Ovary (tissue), 10 donors: ENCODE measurements at regions of chr17 and their contacts with region 1.

Region 1: DNA sequence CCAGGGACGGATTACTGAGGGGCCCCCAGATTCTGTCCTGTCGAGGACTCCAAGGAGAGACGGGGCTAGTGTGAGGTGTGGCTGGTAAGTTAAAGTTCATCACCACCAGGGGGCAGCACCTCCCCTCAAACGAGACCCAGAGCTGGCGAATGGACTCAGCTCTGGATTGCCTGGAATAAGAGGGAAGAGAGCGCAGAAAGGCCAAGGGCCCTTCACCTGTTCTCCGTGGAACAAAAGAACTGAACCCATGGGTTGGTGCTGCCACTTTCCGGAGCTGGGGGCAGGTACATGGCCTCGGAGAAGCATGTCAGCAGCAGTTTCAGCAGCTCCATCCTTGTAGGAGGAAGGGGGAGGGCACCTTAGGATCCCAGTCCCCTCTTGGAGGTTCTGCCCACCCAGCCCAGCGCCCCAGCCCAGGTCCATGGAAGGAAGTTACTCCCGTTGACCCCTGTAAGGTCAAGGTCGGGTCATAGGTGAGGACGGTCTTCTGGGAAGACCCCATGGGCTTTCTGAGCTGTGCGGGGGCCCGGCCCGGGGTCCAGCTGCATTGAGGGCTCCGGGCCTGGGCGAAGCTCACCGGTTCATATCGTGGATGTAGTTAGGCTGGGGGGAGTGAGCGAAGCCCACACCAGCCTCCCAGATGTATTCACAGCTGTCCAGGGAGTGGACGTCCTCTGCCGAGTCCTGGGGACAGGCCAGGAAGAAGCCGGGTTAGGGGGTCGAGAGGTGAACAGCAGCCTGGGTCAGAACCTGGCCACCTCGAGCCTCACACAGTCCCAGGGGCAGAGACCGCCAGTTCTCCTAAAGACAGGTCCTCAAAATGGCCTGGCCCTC is 10.7 kb downstream of the HID1 start:
- DNase-seq: peak; percentile 83 to 93 (median 90)
- H3K4me3 ChIP-seq: no peak overlapping the region
- H3K27ac ChIP-seq: no peak overlapping the region
- H3K4me1 ChIP-seq: no peaks in the 10 kb centered on the region
- H3K27me3 ChIP-seq: no peaks in the 10 kb centered on the region
- CTCF ChIP-seq: peak; percentile 70 to 83 (median 83)
- EP300 ChIP-seq: no peak
- POLR2A ChIP-seq: no peak

Region 2: DNA sequence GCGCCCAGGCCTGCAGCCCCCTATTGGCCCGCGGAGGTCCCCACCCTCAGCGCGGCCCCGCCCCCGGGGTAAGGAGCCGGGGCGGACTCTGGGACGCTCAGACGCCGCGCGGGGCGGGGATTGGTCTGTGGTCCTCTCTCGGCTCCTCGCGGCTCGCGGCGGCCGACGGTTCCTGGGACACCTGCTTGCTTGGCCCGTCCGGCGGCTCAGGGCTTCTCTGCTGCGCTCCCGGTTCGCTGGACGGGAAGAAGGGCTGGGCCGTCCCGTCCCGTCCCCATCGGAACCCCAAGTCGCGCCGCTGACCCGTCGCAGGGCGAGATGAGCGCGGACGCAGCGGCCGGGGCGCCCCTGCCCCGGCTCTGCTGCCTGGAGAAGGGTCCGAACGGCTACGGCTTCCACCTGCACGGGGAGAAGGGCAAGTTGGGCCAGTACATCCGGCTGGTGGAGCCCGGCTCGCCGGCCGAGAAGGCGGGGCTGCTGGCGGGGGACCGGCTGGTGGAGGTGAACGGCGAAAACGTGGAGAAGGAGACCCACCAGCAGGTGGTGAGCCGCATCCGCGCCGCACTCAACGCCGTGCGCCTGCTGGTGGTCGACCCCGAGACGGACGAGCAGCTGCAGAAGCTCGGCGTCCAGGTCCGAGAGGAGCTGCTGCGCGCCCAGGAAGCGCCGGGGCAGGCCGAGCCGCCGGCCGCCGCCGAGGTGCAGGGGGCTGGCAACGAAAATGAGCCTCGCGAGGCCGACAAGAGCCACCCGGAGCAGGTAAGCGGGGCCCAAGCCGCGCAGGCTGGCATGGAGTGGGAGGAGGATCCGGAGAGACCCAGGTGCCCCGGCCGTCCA is 213.1 kb before region 1 on chr17 and contains the start of gene NHERF1:
- intact Hi-C with region 1: loop called in 2 of 4 experiments (anchors 5 kb)
- DNase-seq: peak; percentile 91 to 96 (median 94)
- H3K4me3 ChIP-seq: peak within 1 kb of the TSS; percentile 72
- H3K27ac ChIP-seq: peak within 1 kb of the TSS in 1 of 2 donors; percentile 65
- H3K4me1 ChIP-seq: peaks cover 10% of the 10 kb centered on the region
- H3K27me3 ChIP-seq: no peaks in the 10 kb centered on the region
- CTCF ChIP-seq: peak in 1 of 3 donors; percentile 23
- EP300 ChIP-seq: no peak
- POLR2A ChIP-seq: peak; percentile 92
- total RNA-seq, gene NHERF1: 12.1 to 101 (median 21.7) TPM

Region 3: DNA sequence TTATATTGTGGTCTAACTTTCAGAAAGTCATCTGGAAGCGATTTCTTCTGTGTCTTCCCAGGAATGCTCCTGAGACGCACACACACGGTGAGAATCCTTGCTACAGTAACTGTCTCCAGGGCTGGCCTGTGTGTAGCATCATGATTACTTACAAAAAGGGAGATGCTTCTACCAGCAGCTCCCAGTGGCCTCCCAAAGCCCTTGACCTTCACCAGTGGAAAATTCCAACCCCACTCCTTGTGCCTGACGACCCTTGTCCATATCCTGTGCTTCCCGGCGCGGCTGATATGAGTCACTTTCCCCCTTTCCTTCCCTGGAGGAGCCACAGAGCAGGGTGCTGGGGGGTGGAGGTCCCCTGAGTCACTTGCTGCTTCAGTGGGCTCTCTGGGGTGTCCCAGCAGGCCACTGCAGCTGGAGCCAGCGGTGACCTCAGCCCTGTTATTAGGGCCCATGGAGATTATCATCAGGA is 163.6 kb before region 1 on chr17:
- intact Hi-C with region 1: loop called in 2 of 4 experiments (anchors 5 to 10 kb)
- DNase-seq: no peak
- H3K4me3 ChIP-seq: no peak overlapping the region
- H3K27ac ChIP-seq: no peak overlapping the region
- H3K4me1 ChIP-seq: no peaks in the 10 kb centered on the region
- H3K27me3 ChIP-seq: no peaks in the 10 kb centered on the region
- CTCF ChIP-seq: no peak
- EP300 ChIP-seq: no peak
- POLR2A ChIP-seq: no peak

Region 4: DNA sequence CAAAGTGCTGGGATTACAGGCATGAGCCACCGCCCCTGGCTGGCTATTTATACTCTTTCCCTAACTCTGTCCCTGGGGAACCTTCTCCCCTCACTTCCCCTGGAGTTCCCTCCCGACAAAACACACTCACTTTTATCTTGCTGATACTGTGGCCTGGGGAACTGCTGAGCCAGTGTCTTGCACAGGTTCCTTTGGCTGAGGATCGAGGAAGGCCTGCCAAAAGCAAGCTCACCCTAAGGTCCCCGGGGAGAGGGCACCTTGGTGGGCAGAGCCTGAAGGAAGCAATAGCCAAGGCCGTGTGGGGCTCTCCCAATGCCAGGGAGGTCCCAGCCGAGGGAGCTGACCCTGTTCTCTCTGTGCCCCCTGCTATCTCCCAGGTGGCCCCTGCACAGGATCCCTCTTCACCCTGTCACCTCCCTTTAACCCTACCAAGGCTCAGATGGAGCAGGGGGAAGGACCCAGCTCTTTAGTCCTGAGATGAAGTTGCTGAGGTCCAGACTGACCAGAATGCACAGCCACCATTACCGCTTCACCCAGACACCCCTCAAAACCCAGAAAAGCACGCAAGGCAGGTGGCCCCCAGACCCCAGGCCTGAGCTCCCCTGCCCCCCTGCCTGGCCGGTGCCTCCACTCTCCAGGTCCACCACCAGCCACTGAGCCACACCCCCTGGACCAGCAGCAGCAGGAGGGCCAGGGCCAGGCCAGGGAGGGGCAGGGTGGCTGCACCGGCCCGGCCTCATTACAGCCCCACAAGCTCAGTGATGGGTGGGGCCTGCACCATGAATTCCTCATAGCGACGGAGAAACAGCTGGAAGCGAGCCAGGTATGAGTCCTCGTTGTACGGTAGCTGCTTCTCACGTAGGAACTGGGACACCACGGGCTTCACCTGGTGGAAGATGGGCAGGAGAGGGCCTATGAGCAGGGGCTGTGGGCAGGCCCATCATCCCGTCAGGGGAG is 84.0 kb before region 1 on chr17:
- intact Hi-C with region 1: no loop called
- DNase-seq: peak in 4 of 5 donors; percentile 45 to 64 (median 49)
- H3K4me3 ChIP-seq: no peak overlapping the region
- H3K27ac ChIP-seq: no peak overlapping the region
- H3K4me1 ChIP-seq: no peaks in the 10 kb centered on the region
- H3K27me3 ChIP-seq: no peaks in the 10 kb centered on the region
- CTCF ChIP-seq: no peak
- EP300 ChIP-seq: no peak
- POLR2A ChIP-seq: no peak

Region 5: GRCh38 chr17:75012346-75013091 is 50.6 kb after region 1 on chr17 and contains the start of gene MRPL58:
- intact Hi-C with region 1: loop called in 1 of 4 experiments (anchors 10 kb)
- DNase-seq: peak; percentile 79 to 90 (median 82)
- H3K4me3 ChIP-seq: peak within 1 kb of the TSS; percentile 87
- H3K27ac ChIP-seq: peak within 1 kb of the TSS; percentile 77 to 79
- H3K4me1 ChIP-seq: peaks cover 1% of the 10 kb centered on the region
- H3K27me3 ChIP-seq: no peaks in the 10 kb centered on the region
- CTCF ChIP-seq: peak in 2 of 3 donors; percentile 59 to 69
- EP300 ChIP-seq: no peak
- POLR2A ChIP-seq: peak; percentile 36
- total RNA-seq, gene MRPL58: 17.9 to 40.6 (median 22.0) TPM

Region 6: DNA sequence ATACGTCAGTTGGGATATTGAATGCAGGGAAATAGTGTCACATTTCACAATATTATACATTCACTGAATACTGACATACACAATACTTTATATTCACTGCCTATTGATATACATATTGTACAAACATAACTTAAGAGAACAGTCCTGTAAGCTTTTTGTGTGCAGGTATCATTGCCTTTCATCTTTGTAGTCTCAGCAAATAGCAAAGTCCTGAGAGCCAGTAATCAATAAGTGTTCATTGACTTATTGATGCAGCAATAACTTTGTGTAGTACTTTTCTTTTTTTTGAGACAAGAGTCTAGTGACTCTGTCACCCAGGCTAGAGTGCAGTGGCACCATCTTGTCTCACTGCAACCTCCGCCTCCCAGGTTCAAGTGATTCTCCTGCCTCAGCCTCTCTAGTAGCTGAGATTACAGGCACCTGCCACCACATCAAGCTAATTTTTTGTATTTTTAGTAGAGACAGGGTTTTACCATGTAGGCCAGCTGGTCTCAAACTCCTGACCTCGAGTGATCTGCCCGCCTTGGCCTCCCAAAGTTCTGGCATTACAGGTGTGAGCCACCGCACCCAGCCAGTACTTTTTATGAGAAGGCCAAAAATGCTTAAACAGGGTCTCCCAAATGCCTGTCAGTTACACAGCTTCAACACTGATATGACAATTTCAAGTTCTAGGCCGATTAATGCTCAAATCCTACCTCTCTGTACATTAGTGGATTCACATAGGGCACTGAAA is 238.2 kb after region 1 on chr17:
- intact Hi-C with region 1: loop called (anchors 5 to 10 kb)
- DNase-seq: no peak
- H3K4me3 ChIP-seq: no peak overlapping the region
- H3K27ac ChIP-seq: no peak overlapping the region
- H3K4me1 ChIP-seq: peaks cover 4% of the 10 kb centered on the region
- H3K27me3 ChIP-seq: no peaks in the 10 kb centered on the region
- CTCF ChIP-seq: no peak
- EP300 ChIP-seq: no peak
- POLR2A ChIP-seq: no peak

Region 7: GRCh38 chr17:75950821-75951554 is 989.1 kb after region 1 on chr17:
- intact Hi-C with region 1: no loop called
- DNase-seq: no peak
- H3K4me3 ChIP-seq: no peak overlapping the region
- H3K27ac ChIP-seq: no peak overlapping the region
- H3K4me1 ChIP-seq: no peaks in the 10 kb centered on the region
- H3K27me3 ChIP-seq: no peaks in the 10 kb centered on the region
- CTCF ChIP-seq: no peak
- EP300 ChIP-seq: no peak
- POLR2A ChIP-seq: no peak